Right lobe of liver (tissue), 6 donors: ENCODE measurements at regions of chr16 and their contacts with region 1.

Region 1: GRCh38 chr16:84925092-84925772 is 86.1 kb downstream of the ZDHHC7 start:
- DNase-seq: peak; percentile 70 to 78 (median 75)
- ATAC-seq: peak; percentile 67 to 81 (median 77)
- H3K4me3 ChIP-seq: no peak overlapping the region
- H3K27ac ChIP-seq: no peak overlapping the region
- H3K4me1 ChIP-seq: peaks cover 0 to 11% (median 4%) of the 10 kb centered on the region in 4 donors
- H3K27me3 ChIP-seq: no peaks in the 10 kb centered on the region
- CTCF ChIP-seq: peak; percentile 88 to 97 (median 94)
- POLR2A ChIP-seq: no peak

Region 2: GRCh38 chr16:84851192-84852127 is 73.8 kb before region 1 on chr16:
- intact Hi-C with region 1: no loop called
- DNase-seq: peak; percentile 77 to 87 (median 85)
- ATAC-seq: peak; percentile 87 to 95 (median 92)
- H3K4me3 ChIP-seq: no peak overlapping the region
- H3K27ac ChIP-seq: peak overlapping the region in 1 of 3 donors; percentile 57
- H3K4me1 ChIP-seq: peaks cover 0 to 13% (median 8%) of the 10 kb centered on the region in 4 donors
- H3K27me3 ChIP-seq: no peaks in the 10 kb centered on the region
- CTCF ChIP-seq: no peak
- POLR2A ChIP-seq: no peak

Region 3: DNA sequence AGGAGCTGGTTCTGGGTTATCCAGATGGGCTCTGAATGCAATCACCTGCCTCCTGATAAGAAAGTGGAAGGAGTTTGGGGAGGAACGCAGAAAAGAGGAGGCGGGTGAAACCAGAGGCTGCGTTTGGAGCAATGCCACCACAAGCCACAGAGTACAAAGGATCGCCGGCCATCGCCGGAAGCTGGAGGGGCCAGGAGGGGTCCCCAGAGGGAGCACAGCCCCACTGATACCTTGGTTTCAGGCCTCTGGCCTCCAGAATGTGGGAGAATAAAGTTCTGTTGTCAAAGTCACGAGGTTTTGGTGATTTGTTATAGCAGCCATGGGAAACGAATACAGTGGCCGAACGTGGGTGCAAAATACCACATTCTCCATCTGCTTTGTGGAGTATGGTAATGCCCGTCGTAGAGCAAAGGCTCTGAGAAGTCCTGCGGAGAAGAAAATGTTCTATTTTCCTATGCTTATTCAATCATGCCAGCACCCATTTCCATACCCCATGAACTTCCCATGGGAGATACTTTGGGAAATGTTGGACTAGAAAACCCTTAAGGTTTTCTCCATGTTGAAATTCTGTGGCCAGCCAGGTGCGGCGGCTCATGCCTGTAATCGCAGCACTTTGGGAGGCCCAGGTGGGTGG is 34.7 kb after region 1 on chr16:
- intact Hi-C with region 1: loop called in 1 of 2 experiments (anchors 5 kb)
- DNase-seq: no peak
- ATAC-seq: no peak
- H3K4me3 ChIP-seq: no peak overlapping the region
- H3K27ac ChIP-seq: no peak overlapping the region
- H3K4me1 ChIP-seq: peaks cover 0 to 12% (median 0%) of the 10 kb centered on the region in 4 donors
- H3K27me3 ChIP-seq: no peaks in the 10 kb centered on the region
- CTCF ChIP-seq: no peak
- POLR2A ChIP-seq: no peak

Region 4: DNA sequence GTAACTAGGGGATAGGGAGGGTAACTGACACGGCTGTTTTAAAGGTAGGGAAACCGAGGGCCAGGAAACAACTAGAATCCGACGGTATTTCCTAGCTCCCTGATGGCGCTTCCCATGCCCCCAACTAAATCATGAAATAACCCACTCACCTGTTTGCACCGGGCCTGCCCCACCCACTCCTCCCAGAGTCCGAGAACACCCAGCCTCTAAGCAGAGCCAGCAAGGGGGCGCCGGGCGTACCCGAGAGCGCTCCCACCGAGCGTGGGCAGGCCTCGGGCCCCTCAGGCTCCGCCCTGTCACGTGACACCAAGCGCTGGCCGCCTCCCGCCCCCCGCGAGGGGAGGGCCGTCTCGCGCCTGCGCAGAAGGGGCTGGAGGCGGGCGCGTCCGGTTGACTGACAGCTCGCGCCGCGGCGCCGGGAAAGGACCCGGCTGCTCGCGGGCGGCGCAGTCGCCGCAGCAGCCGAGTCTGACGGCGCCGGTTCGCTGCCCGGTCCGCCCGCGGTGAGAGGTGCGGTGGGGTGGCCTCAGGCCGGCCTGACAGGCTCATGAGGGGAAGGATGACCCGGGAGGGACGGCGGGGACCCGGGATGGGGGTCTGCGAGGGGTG is 102.2 kb after region 1 on chr16 and contains the start of gene KIAA0513:
- intact Hi-C with region 1: no loop called
- DNase-seq: peak; percentile 97
- ATAC-seq: peak; percentile 93 to 97 (median 94)
- H3K4me3 ChIP-seq: peak within 1 kb of the TSS; percentile 64 to 81 (median 69)
- H3K27ac ChIP-seq: peak within 1 kb of the TSS; percentile 61 to 82 (median 75)
- H3K4me1 ChIP-seq: peaks cover 0 to 14% (median 0%) of the 10 kb centered on the region in 4 donors
- H3K27me3 ChIP-seq: no peaks in the 10 kb centered on the region
- CTCF ChIP-seq: peak in 3 of 4 donors; percentile 21 to 34 (median 24)
- POLR2A ChIP-seq: peak; percentile 95
- total RNA-seq, gene KIAA0513: 2.6 to 7.4 (median 4.7) TPM